B cell (primary cell): ENCODE measurements at regions of chr19 and their contacts with region 1.

Region 1: GRCh38 chr19:7705387-7706187 is 3.7 kb upstream of the FCER2 start:
- DNase-seq: peak; percentile 94
- ATAC-seq: peak; percentile 45
- H3K4me3 ChIP-seq: peak overlapping the region in 4 of 5 experiments; percentile 12 to 42 (median 21)
- H3K4me3 Mint-ChIP-seq: peak overlapping the region; percentile 87
- H3K27ac ChIP-seq: peak overlapping the region; percentile 95 to 98
- H3K27ac Mint-ChIP-seq: peak overlapping the region; percentile 100
- H3K4me1 ChIP-seq: peaks cover 90 to 97% of the 10 kb centered on the region in 2 donors
- H3K4me1 Mint-ChIP-seq: peaks cover 83% of the 10 kb centered on the region
- H3K27me3 ChIP-seq: no peaks in the 10 kb centered on the region
- H3K27me3 Mint-ChIP-seq: no peaks in the 10 kb centered on the region
- CTCF ChIP-seq: no peak

Region 2: DNA sequence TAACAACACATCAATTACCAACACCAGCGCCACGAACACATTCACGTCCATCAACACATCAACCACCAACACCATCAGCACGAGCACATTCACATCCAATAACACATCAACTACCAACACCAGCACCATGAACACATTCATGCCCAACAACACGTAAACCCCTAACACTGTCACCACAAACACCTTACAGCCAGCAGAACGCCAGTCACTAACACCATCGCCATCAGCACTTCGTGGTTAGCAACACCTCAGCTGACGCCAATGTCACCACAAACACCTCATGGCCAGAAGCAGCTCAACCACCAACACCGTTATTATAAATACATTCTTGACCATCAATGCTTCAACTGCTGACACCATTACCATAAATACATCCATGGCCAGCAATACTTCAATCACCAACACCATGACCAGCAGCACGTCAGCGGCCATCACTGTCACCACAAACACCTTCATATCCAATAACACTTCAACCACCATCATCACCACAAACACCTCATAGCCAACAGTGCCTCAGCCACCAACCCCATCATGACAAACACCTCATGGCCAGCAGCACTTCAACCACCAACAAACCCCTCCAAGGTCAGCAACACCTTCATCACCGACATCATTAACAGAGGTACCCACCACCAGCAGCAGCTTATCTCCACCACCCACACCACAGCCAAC is 13.0 kb before region 1 on chr19:
- CTCF ChIA-PET with region 1: interaction called, 5 read pairs
- POLR2A ChIA-PET with region 1: interaction called, 9 read pairs
- intact Hi-C with region 1: loop called (anchors 1 kb)
- DNase-seq: no peak
- ATAC-seq: no peak
- H3K4me3 ChIP-seq: no peak overlapping the region
- H3K4me3 Mint-ChIP-seq: no peak overlapping the region
- H3K27ac ChIP-seq: peak overlapping the region; percentile 43 to 59
- H3K27ac Mint-ChIP-seq: no peak overlapping the region
- H3K4me1 ChIP-seq: peaks cover 66 to 69% of the 10 kb centered on the region in 2 donors
- H3K4me1 Mint-ChIP-seq: peaks cover 33% of the 10 kb centered on the region
- H3K27me3 ChIP-seq: no peaks in the 10 kb centered on the region
- H3K27me3 Mint-ChIP-seq: no peaks in the 10 kb centered on the region
- CTCF ChIP-seq: no peak

Region 3: DNA sequence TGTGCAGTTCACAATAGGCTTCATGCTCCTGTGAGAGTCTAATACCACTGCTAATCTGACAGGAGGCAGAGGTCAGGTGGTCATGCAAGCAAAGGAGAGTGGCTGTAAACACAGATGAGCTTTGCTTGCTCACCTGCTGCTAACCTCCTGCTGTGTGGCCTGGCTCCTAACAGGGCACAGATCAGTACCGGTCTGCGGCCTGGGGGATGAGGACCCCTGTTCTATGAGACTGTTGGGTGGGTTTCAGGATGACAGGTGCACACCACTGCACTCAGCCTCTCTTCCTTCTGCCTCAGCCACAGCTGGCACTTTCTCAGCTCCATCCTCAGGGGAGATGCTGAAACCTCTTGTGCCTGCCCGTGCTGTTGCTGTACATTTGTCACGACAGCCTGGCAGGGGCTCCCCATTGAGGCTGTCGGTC is 16.7 kb after region 1 on chr19:
- CTCF ChIA-PET with region 1: no interaction called
- POLR2A ChIA-PET with region 1: interaction called, 5 read pairs
- intact Hi-C with region 1: loop called (anchors 1 kb)
- DNase-seq: no peak
- ATAC-seq: peak; percentile 38
- H3K4me3 ChIP-seq: no peak overlapping the region
- H3K4me3 Mint-ChIP-seq: no peak overlapping the region
- H3K27ac ChIP-seq: no peak overlapping the region
- H3K27ac Mint-ChIP-seq: peak overlapping the region; percentile 26
- H3K4me1 ChIP-seq: peaks cover 27 to 40% of the 10 kb centered on the region in 2 donors
- H3K4me1 Mint-ChIP-seq: peaks cover 38% of the 10 kb centered on the region
- H3K27me3 ChIP-seq: peaks cover 0 to 3% (median 0%) of the 10 kb centered on the region in 4 experiments
- H3K27me3 Mint-ChIP-seq: peaks cover under 1% of the 10 kb centered on the region
- CTCF ChIP-seq: no peak

Region 4: DNA sequence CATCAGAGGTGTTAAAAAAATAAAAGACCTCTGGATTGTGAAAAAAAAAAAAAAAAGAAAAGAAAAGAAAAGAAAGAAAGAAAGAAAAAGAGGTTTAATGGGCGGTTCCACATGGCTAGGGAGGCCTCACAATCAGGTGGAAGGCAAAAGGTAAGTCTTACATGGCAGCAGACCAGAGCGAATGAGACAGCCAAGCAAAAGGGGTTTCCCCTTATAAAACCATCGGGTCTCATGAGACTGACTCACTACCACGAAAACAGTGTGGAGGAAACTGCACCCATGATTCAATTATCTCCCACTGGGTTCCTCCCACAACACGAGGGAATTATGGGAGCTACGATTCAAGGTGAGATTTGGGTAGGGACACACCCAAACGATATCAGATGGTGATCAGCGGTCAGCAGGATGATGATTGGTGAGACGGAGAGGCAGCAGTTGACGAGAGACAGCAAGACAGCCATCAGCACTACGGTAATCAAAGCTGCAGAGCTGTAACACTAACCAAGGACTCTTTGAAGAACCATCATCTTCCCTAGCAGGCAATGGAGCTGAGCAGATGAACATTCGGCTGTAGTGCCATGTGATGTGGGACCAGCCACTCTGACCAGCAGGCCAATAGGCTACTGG is 45.7 kb after region 1 on chr19:
- CTCF ChIA-PET with region 1: interaction called, 4 read pairs
- POLR2A ChIA-PET with region 1: interaction called, 5 read pairs
- intact Hi-C with region 1: loop called (anchors 1 kb)
- DNase-seq: peak; percentile 91
- ATAC-seq: peak; percentile 94
- H3K4me3 ChIP-seq: peak overlapping the region in 1 of 5 experiments; percentile 25
- H3K4me3 Mint-ChIP-seq: peak overlapping the region; percentile 58
- H3K27ac ChIP-seq: peak overlapping the region; percentile 80 to 84
- H3K27ac Mint-ChIP-seq: peak overlapping the region; percentile 90
- H3K4me1 ChIP-seq: peaks cover 34 to 43% of the 10 kb centered on the region in 2 donors
- H3K4me1 Mint-ChIP-seq: peaks cover 41% of the 10 kb centered on the region
- H3K27me3 ChIP-seq: peaks cover 0 to 5% (median 0%) of the 10 kb centered on the region in 4 experiments
- H3K27me3 Mint-ChIP-seq: peaks cover 5% of the 10 kb centered on the region
- CTCF ChIP-seq: no peak

Region 5: GRCh38 chr19:7808133-7808532 is 102.5 kb after region 1 on chr19:
- CTCF ChIA-PET with region 1: interaction called, 58 read pairs
- POLR2A ChIA-PET with region 1: interaction called, 9 read pairs
- intact Hi-C with region 1: loop called (anchors 1 kb)
- DNase-seq: no peak
- ATAC-seq: no peak
- H3K4me3 ChIP-seq: peak overlapping the region in 1 of 5 experiments; percentile 14
- H3K4me3 Mint-ChIP-seq: no peak overlapping the region
- H3K27ac ChIP-seq: peak overlapping the region in 1 of 2 donors; percentile 17
- H3K27ac Mint-ChIP-seq: no peak overlapping the region
- H3K4me1 ChIP-seq: peaks cover 0 to 17% of the 10 kb centered on the region in 2 donors
- H3K4me1 Mint-ChIP-seq: peaks cover 18% of the 10 kb centered on the region
- H3K27me3 ChIP-seq: peaks cover 0 to 6% (median 3%) of the 10 kb centered on the region in 4 experiments
- H3K27me3 Mint-ChIP-seq: peaks cover 3% of the 10 kb centered on the region
- CTCF ChIP-seq: no peak